MCF 10A (cell line): ENCODE measurements at regions of chr19 and their contacts with region 1.

Region 1: DNA sequence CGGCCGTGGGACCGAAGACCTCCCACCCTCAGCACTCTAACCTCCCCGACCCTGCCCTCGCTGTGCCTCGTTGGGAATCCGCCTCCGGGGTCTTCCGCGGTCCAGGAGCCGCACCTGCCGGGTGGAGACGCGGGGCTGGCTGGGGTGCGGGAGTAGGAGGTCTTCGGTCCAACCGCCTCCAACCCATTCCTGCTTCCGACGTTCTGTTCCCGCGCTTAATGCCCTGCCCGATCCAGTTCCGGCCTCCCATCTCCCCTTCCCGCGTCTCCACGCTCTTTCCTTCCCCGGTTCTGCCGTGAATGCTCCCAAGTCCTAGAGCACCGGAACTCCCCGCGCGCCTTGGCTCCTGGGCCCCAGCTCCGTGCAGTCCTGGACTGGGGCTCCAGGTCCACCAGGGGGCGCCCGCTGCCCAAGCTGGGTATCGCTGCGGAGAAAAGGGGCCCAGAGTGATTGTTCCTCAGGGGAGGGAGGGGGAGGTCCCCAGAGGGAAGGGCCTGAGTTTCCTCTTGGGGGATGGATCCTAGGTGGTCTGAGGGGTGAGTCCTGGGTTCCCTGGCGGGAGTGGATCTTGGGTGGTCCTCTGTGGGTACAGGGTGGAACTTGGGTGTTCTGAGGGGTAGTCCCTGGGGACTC is 14.1 kb upstream of the TNFSF9 start:
- DNase-seq: peak; percentile 93
- H3K4me3 Mint-ChIP-seq: peak overlapping the region; percentile 83
- H3K27ac Mint-ChIP-seq: peak overlapping the region; percentile 67
- H3K4me1 Mint-ChIP-seq: peaks cover 18% of the 10 kb centered on the region
- H3K27me3 Mint-ChIP-seq: no peaks in the 10 kb centered on the region
- CTCF ChIP-seq: peak; percentile 94

Region 2: DNA sequence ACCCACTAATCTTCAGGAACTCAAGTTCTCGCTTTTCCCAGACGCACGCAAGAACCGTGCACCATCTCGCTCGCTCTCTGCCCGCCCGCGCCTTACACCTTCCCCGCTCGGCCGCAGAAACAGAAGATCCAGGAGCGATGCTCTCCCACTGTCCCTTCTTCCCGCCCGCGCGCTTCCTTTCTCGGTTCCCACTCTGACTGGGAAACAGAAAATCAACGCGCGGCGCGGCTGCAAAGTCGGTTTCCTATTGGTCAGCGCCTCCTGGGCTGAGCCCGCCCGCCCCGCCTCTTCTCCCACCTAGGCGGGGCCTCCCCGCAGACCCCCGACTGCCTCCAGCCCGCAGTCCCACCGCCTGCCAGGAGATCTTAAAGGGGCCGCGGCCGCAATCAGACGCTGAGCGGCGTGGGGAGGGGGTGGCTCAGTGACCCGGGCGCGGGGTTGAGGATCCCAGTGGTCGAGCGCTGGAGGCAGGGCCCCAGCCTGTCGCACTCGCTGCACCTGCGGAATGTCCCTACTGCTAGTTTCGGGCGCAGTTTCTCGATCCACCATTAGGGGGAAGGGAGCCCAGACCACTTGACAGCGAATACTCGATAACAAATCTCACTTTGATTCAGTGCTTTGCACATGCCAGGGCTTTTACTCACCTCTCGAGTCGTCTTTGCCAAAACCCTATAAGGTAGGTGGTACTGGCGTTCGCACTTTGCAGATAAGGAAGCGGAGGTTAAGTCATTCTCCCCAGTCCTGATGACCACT is 56.5 kb before region 1 on chr19:
- CTCF ChIA-PET with region 1: no interaction called
- POLR2A ChIA-PET with region 1: no interaction called
- intact Hi-C with region 1: no loop called
- DNase-seq: peak; percentile 99
- H3K4me3 Mint-ChIP-seq: peak overlapping the region; percentile 80
- H3K27ac Mint-ChIP-seq: peak overlapping the region; percentile 13
- H3K4me1 Mint-ChIP-seq: peaks cover 16% of the 10 kb centered on the region
- H3K27me3 Mint-ChIP-seq: no peaks in the 10 kb centered on the region
- CTCF ChIP-seq: peak; percentile 22

Region 3: GRCh38 chr19:6530386-6531161 is 13.8 kb after region 1 on chr19 and contains the start of gene TNFSF9:
- CTCF ChIA-PET with region 1: interaction called, 5 read pairs
- POLR2A ChIA-PET with region 1: interaction called, 25 read pairs
- intact Hi-C with region 1: no loop called
- DNase-seq: peak; percentile 93
- H3K4me3 Mint-ChIP-seq: peak within 1 kb of the TSS; percentile 84
- H3K27ac Mint-ChIP-seq: peak within 1 kb of the TSS; percentile 94
- H3K4me1 Mint-ChIP-seq: peaks cover 34% of the 10 kb centered on the region
- H3K27me3 Mint-ChIP-seq: no peaks in the 10 kb centered on the region
- CTCF ChIP-seq: no peak
- total RNA-seq, gene TNFSF9: 6.2 and 6.9 TPM in 2 replicates

Region 4: GRCh38 chr19:6564393-6564792 is 47.6 kb after region 1 on chr19:
- CTCF ChIA-PET with region 1: interaction called, 9 read pairs
- POLR2A ChIA-PET with region 1: no interaction called
- intact Hi-C with region 1: loop called (anchors 5 kb)
- DNase-seq: peak; percentile 66
- H3K4me3 Mint-ChIP-seq: no peak overlapping the region
- H3K27ac Mint-ChIP-seq: no peak overlapping the region
- H3K4me1 Mint-ChIP-seq: no peaks in the 10 kb centered on the region
- H3K27me3 Mint-ChIP-seq: no peaks in the 10 kb centered on the region
- CTCF ChIP-seq: no peak

Region 5: GRCh38 chr19:6610934-6611852 is 94.4 kb after region 1 on chr19:
- CTCF ChIA-PET with region 1: interaction called, 3 read pairs
- POLR2A ChIA-PET with region 1: no interaction called
- intact Hi-C with region 1: loop called (anchors 1 kb)
- DNase-seq: peak; percentile 85
- H3K4me3 Mint-ChIP-seq: peak overlapping the region; percentile 11
- H3K27ac Mint-ChIP-seq: peak overlapping the region; percentile 59
- H3K4me1 Mint-ChIP-seq: peaks cover 36% of the 10 kb centered on the region
- H3K27me3 Mint-ChIP-seq: no peaks in the 10 kb centered on the region
- CTCF ChIP-seq: no peak

Region 6: DNA sequence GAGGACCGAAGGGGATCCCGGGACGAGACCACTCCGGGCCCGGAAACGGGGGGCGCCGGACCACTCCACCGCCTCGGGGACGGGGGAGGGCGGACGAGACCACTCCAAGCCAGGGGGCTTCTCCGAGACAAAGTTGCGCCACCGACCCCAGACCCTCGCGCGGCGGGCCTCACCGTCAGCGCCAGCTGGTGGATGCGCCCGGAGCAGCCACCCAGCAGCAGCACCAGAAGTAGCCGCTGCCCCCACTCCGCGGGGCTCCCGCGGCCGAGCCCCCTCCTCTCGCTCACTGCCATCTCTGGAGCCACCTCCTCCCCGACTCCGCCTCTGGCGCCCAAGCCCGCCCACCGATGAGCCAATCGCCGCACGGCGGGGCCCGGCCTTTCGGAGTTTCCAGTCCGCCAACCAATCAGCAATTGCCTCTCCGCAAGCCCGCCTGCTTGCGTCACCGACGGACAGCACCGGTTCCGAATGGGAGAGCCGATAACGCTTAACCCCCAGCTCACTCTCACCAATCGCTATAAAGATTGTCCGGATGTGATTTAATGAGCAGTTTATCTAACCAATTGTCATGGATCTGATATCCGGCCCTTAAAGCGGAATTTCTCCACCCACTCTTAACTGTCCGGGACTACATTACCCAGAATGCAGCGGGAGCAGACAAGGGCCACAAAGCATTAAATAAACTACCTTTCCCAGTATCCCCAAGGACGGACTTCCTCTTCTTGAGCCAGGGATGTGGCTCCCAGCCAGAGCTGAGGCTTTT is 220.7 kb after region 1 on chr19 and contains the start of gene GPR108:
- CTCF ChIA-PET with region 1: interaction called, 4 read pairs
- POLR2A ChIA-PET with region 1: interaction called, 5 read pairs
- intact Hi-C with region 1: loop called (anchors 1 kb)
- DNase-seq: peak; percentile 100
- H3K4me3 Mint-ChIP-seq: peak within 1 kb of the TSS; percentile 88
- H3K27ac Mint-ChIP-seq: peak within 1 kb of the TSS; percentile 83
- H3K4me1 Mint-ChIP-seq: peaks cover 27% of the 10 kb centered on the region
- H3K27me3 Mint-ChIP-seq: no peaks in the 10 kb centered on the region
- CTCF ChIP-seq: no peak
- total RNA-seq, gene GPR108: 115 and 124 TPM in 2 replicates